Endothelial cell of umbilical vein (primary cell): ENCODE measurements at regions of chr2 and their contacts with region 1.

Region 1: DNA sequence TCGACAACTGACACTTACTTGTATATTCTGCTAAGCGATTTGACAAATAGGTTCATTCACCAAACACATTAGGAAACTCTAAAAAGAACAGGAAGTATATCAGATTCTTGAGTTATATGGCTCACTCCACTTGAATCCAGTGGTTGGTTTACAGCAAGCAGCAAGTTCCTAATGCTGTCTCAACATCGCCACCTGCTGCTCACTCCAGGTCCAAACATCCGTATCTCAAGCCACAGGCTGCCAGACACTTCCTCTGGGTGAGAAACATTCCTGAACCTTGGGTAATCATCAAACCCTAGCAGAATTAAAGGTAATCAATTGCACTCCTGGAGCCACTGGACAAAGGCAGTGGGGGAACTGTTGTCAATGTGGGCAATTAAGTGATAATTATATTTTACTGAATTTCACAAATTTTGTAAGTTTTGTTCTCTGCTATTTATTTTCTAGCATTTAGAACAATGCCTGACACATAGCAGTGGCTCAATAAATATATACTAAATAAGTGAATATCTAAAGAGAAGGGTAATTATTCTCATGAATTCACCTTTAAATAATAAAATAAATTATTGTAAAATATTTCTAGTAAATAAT is 107.1 kb upstream of the TTN start:
- DNase-seq: peak; percentile 88
- H3K4me3 ChIP-seq: no peak overlapping the region
- H3K27ac ChIP-seq: no peak overlapping the region
- H3K4me1 ChIP-seq: peaks cover 2% of the 10 kb centered on the region
- H3K27me3 ChIP-seq: peaks cover 0 to 10% of the 10 kb centered on the region in 2 experiments
- CTCF ChIP-seq: peak; percentile 79 to 88
- POLR2A ChIP-seq: no peak

Region 2: GRCh38 chr2:178804791-178805190 is 109.6 kb before region 1 on chr2:
- CTCF ChIA-PET with region 1: interaction called, 4 read pairs
- POLR2A ChIA-PET with region 1: no interaction called
- dilution Hi-C with region 1: loop called (anchors 25 kb)
- intact Hi-C with region 1: no loop called
- DNase-seq: no peak
- H3K4me3 ChIP-seq: no peak overlapping the region
- H3K27ac ChIP-seq: no peak overlapping the region
- H3K4me1 ChIP-seq: no peaks in the 10 kb centered on the region
- H3K27me3 ChIP-seq: no peaks in the 10 kb centered on the region
- CTCF ChIP-seq: peak; percentile 25 to 32
- POLR2A ChIP-seq: no peak

Region 3: DNA sequence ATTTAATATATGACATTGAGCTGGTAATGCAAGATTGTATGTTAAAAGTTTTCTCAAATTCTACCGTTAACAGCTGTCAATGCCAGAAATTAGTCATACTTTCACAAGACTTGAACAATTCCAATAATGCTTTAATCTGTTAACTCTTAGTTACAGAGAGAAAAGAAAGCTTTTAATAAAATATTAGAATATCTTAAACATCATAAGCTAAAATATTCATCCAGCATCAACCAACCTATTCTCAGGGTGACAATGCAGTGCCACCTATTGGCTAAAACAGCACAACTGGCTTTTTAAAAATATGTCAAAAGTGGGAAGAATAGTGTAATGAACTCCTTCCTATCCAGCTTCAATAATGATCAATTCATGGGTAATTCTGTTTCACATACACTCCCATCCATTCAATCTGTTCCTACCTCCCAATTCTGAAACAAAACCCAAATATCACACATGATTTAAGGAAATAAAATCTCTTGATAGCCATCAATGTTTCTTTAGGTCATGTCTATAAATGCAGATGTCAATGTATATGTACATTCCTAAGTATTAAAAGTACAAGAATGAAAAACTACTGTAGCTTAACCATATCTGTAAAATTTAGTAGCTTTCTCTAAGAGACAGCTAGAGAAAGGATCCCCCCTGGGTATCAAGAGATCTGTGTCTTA is 215.4 kb after region 1 on chr2:
- CTCF ChIA-PET with region 1: interaction called, 12 read pairs
- POLR2A ChIA-PET with region 1: no interaction called
- dilution Hi-C with region 1: no loop called
- intact Hi-C with region 1: loop called (anchors 5 kb)
- DNase-seq: peak; percentile 35
- H3K4me3 ChIP-seq: no peak overlapping the region
- H3K27ac ChIP-seq: no peak overlapping the region
- H3K4me1 ChIP-seq: no peaks in the 10 kb centered on the region
- H3K27me3 ChIP-seq: no peaks in the 10 kb centered on the region
- CTCF ChIP-seq: peak; percentile 36 to 37
- POLR2A ChIP-seq: no peak

Region 4: DNA sequence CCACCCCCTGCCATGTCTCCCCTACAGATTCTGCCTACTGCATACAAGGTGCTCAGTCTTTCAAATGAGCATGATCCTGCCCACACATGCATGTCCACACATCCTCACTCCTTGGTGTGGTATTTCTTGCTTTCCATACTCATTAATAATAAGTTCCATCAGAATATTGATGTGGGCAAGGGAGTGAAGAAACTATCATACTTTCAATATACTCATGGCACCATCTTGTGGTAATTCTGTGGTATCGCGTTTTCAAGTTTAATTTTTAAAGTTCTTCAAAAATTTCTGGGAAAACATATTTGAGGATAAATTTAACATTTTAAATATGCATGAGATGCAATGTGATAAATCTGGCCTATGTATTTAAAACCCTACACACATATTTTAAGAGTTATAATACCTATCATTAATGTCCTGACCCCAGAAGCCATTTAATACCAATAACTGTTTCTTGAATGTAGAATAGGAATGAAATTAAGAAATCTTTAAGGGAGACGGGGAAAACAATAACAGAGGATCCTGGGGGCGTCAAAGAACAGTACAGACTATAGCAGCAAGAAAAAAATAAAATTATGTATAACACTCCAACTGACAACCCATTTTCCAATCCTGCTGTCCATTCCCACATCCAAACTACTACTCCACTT is 836.9 kb after region 1 on chr2:
- CTCF ChIA-PET with region 1: no interaction called
- POLR2A ChIA-PET with region 1: no interaction called
- dilution Hi-C with region 1: no loop called
- intact Hi-C with region 1: loop called (anchors 10 kb)
- DNase-seq: peak; percentile 42
- H3K4me3 ChIP-seq: no peak overlapping the region
- H3K27ac ChIP-seq: no peak overlapping the region
- H3K4me1 ChIP-seq: no peaks in the 10 kb centered on the region
- H3K27me3 ChIP-seq: no peaks in the 10 kb centered on the region
- CTCF ChIP-seq: peak; percentile 34 to 36
- POLR2A ChIP-seq: no peak